HAP-1 (cell line): ENCODE measurements at regions of chr17 and their contacts with region 1.

Region 1: GRCh38 chr17:74776044-74776977 is at the start of gene NAT9:
- DNase-seq: peak; percentile 87 to 99
- H3K4me3 ChIP-seq: peak within 1 kb of the TSS; percentile 89
- H3K4me1 ChIP-seq: peaks cover 5% of the 10 kb centered on the region
- H3K27me3 ChIP-seq: no peaks in the 10 kb centered on the region

Region 2: DNA sequence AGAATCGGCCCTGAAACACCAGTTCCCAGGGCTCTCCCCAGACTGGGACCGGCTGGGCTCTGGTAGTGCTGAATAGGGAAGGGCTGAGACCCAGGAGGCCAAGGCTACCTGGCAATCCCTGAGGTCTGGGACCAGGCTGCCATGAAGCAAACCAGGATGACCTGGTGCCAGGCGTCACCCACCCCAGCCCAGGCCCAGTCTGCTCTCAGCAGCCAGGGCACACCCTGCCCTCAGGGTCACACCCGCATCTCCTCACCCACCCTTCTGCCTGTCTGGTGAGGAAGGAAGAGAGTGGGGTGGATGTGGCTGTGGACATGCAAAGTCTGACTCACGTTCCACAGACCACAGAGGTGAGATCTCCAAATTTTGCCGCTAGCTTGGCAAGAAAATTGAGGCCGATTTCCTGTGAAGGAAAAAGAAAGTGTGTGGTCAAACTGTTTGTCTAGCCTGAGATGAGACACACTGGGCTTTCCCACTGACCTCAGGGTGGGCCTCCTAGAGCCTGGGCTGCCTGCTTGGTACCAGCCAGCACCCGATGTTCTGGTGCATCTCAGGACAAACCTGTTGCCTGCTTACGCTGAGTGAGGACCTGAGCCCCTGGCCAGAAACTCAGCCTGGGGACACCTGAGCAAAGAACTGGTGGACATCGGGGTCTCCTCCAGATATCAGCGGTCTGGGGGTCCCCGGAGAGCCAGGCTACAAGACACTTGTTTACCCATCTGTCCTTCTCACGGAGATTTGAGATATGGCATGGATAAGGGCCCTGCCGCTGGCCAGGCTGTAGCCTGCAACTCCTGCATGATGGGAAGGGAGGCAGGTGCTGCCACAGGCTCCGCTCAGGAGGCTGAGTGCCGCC is 45.6 kb before region 1 on chr17:
- in situ Hi-C with region 1: loop called (anchors 5 kb)
- DNase-seq: no peak
- H3K4me3 ChIP-seq: no peak overlapping the region
- H3K4me1 ChIP-seq: no peaks in the 10 kb centered on the region
- H3K27me3 ChIP-seq: peaks cover 4% of the 10 kb centered on the region; the same call in 1 of the 2 replicates

Region 3: GRCh38 chr17:75405365-75406221 is 629.3 kb after region 1 on chr17 and contains the start of gene GRB2:
- in situ Hi-C with region 1: loop called (anchors 25 kb)
- DNase-seq: peak; percentile 97 to 99
- H3K4me3 ChIP-seq: peak within 1 kb of the TSS; percentile 98
- H3K4me1 ChIP-seq: peaks cover 11% of the 10 kb centered on the region
- H3K27me3 ChIP-seq: 0 out of 2 replicates have a peak, but pooled peaks cover 2% of the 10 kb centered on the region